PC-3 (cell line): ENCODE measurements at regions of chr4 and their contacts with region 1.

Region 1: GRCh38 chr4:95049551-95050233 is 291.9 kb downstream of the BMPR1B start:
- DNase-seq: no peak
- ATAC-seq: no peak
- H3K4me3 ChIP-seq: no peak overlapping the region
- H3K27ac ChIP-seq: no peak overlapping the region
- H3K4me1 ChIP-seq: peaks cover 16% of the 10 kb centered on the region
- H3K27me3 ChIP-seq: no peaks in the 10 kb centered on the region
- CTCF ChIP-seq: no peak

Region 2: DNA sequence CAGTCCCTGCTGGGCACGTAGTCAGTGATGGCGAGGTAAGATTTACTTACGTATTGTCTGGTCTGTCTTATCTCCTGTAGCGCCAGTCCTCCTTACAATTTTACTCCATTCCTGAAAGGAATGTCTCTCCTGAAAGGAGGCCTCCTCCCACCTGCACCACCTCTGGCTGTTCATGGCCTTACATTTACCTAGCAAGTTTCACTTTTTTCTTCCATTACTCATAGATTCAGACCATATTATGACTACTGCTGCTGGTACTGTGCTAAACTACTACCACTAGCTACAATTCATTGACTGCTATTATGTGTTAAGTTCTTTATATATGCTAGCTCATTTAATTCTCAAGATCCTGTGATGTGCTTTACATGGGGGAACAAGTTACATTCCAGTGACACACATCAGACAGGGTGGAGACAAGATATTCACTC is 102.0 kb before region 1 on chr4:
- CTCF ChIA-PET with region 1: no interaction called
- POLR2A ChIA-PET with region 1: interaction called, 15 read pairs
- intact Hi-C with region 1: no loop called
- DNase-seq: peak; percentile 10
- ATAC-seq: peak; percentile 37; the same call in 1 of the 2 replicates
- H3K4me3 ChIP-seq: no peak overlapping the region
- H3K27ac ChIP-seq: no peak overlapping the region
- H3K4me1 ChIP-seq: no peaks in the 10 kb centered on the region
- H3K27me3 ChIP-seq: no peaks in the 10 kb centered on the region
- CTCF ChIP-seq: no peak

Region 3: GRCh38 chr4:95255396-95256107 is 205.9 kb after region 1 on chr4:
- CTCF ChIA-PET with region 1: no interaction called
- POLR2A ChIA-PET with region 1: no interaction called
- intact Hi-C with region 1: no loop called
- DNase-seq: peak; percentile 43
- ATAC-seq: peak; percentile 73
- H3K4me3 ChIP-seq: peak overlapping the region; percentile 37
- H3K27ac ChIP-seq: peak overlapping the region; percentile 79
- H3K4me1 ChIP-seq: peaks cover 23% of the 10 kb centered on the region
- H3K27me3 ChIP-seq: no peaks in the 10 kb centered on the region
- CTCF ChIP-seq: no peak